ENCODE measurements at regions of chr10 and their contacts with region 1.

Region 1: DNA sequence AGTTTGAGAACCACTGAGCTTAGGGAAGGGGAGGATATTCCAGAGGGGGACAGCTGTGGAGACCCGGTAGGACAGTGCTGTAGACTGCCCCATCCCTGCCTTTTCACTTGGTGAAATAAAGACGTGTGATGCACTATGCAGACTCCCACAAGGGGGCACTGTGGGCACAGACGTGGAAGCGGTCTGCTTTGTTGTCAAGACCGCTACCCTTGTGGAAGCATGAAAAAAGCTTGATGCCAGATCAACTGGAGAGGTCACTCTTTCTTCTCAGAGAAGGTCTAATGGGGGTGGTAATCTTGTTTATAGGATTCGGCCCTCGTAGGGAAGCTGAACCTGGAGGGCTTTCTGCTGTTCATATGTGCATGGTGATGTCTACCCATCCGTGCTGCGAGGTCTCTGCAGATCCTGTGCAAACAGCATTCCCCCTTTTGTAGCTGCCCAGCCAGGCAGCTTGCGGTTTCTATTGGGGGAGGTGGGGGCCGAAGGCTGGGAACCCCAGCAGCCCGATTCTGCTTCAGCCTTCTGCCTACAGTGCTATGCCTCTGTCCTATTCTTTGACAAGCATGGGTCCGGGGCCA is 13.7 kb downstream of the RPS24 start:
- DNase-seq: peak; percentile 89
- ATAC-seq: peak; percentile 86
- H3K4me3 Mint-ChIP-seq: no peak overlapping the region
- H3K27ac Mint-ChIP-seq: no peak overlapping the region
- H3K4me1 Mint-ChIP-seq: peaks cover 27% of the 10 kb centered on the region
- H3K27me3 Mint-ChIP-seq: no peaks in the 10 kb centered on the region

Region 2: GRCh38 chr10:78035025-78035424 is 12.4 kb before region 1 on chr10:
- CTCF ChIA-PET with region 1: interaction called, 21 read pairs
- DNase-seq: no peak
- ATAC-seq: no peak
- H3K4me3 Mint-ChIP-seq: peak overlapping the region; percentile 82
- H3K27ac Mint-ChIP-seq: peak overlapping the region; percentile 64
- H3K4me1 Mint-ChIP-seq: peaks cover 56% of the 10 kb centered on the region
- H3K27me3 Mint-ChIP-seq: no peaks in the 10 kb centered on the region

Region 3: GRCh38 chr10:78062296-78062695 is 14.9 kb after region 1 on chr10:
- CTCF ChIA-PET with region 1: interaction called, 22 read pairs
- DNase-seq: peak; percentile 68
- ATAC-seq: peak; percentile 81
- H3K4me3 Mint-ChIP-seq: peak overlapping the region; percentile 11
- H3K27ac Mint-ChIP-seq: peak overlapping the region; percentile 72
- H3K4me1 Mint-ChIP-seq: peaks cover 34% of the 10 kb centered on the region
- H3K27me3 Mint-ChIP-seq: no peaks in the 10 kb centered on the region

Measured in activated CD8-positive, alpha-beta memory T cell treated with anti-CD3 and anti-CD28 coated beads, Interleukin-2, amount 10 ng/mL, durations not matched to agents 7 days and 5 days (primary cell).